MCF 10A (cell line): ENCODE measurements at regions of chr15 and their contacts with region 1.

Region 1: DNA sequence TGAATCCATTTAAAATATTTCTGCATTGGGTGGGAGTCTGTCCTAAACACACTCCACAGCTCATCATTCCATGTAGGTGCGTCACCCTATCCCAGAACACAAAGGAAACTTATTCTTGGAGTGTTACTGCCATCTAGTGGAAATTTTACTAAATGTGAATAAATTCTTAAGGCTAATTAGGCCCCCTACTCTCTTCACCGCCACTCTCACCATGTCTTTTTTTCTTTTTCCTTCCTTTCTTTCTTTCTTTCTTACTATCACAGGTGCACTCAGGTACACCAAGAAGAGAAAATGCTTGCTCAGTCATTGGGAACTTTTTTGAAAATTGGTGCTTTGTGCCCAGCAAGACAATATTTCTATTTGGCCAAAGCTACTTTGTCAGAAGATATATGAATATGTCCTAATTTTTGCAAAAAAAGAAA is 26.4 kb upstream of the ATP8B4 start:
- DNase-seq: peak; percentile 75
- H3K4me3 Mint-ChIP-seq: no peak overlapping the region
- H3K27ac Mint-ChIP-seq: no peak overlapping the region
- H3K4me1 Mint-ChIP-seq: peaks cover 12% of the 10 kb centered on the region
- H3K27me3 Mint-ChIP-seq: no peaks in the 10 kb centered on the region
- CTCF ChIP-seq: peak; percentile 49

Region 2: DNA sequence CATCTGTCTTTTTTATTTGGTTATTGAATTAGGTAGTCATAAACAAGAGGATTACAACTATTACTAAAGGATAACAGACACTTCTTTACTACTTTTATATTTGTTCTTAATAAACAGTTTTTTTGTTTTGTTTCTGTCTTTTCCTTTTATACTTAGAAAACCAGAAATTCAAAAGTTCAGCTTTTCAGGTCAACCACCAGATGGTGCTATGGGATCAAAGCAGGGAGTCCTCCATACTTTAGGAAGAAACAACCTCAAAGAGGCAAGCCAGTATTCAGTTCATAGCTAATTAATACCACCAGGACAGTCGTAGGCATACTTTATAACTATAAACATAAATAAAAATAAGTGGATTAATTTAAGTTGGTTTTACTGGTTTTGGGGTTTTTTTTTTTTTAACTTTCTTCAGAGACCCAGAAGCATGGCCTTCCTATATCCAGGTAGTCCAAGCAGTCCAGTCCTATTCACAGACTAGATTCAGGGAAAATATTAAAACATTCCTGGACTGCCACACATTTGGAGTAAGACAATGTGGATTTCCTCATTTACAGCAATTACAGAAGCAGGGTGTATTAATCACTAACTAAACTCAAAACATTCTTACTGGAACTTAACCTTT is 1283.5 kb before region 1 on chr15:
- CTCF ChIA-PET with region 1: interaction called, 5 read pairs
- POLR2A ChIA-PET with region 1: interaction called, 4 read pairs
- intact Hi-C with region 1: loop called (anchors 2 kb)
- DNase-seq: peak; percentile 72
- H3K4me3 Mint-ChIP-seq: no peak overlapping the region
- H3K27ac Mint-ChIP-seq: peak overlapping the region; percentile 61
- H3K4me1 Mint-ChIP-seq: peaks cover 29% of the 10 kb centered on the region
- H3K27me3 Mint-ChIP-seq: no peaks in the 10 kb centered on the region
- CTCF ChIP-seq: peak; percentile 73

Region 3: DNA sequence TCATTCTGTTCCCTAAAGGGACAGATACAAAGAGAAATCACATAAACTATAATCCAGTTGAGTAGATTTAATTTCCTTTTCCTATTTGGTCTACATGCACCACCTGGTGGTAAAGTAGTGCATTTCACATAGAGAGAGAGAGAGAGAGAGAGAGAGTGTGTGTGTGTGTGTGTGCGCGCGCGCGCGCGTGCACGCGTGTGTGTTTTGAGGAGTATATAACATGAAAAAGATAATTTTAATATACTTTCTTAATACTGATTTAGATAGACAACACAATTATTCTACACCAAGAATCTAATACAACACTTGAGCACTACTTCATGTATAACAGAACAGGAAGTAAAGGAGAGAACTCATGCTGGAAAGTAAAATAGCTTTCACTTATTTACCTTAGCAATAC is 723.5 kb before region 1 on chr15:
- CTCF ChIA-PET with region 1: no interaction called
- POLR2A ChIA-PET with region 1: no interaction called
- intact Hi-C with region 1: loop called (anchors 10 kb)
- DNase-seq: peak; percentile 70
- H3K4me3 Mint-ChIP-seq: peak overlapping the region; percentile 58
- H3K27ac Mint-ChIP-seq: no peak overlapping the region
- H3K4me1 Mint-ChIP-seq: peaks cover 7% of the 10 kb centered on the region
- H3K27me3 Mint-ChIP-seq: no peaks in the 10 kb centered on the region
- CTCF ChIP-seq: peak; percentile 72

Region 4: GRCh38 chr15:49953421-49953820 is 192.0 kb before region 1 on chr15:
- CTCF ChIA-PET with region 1: no interaction called
- POLR2A ChIA-PET with region 1: no interaction called
- intact Hi-C with region 1: no loop called
- DNase-seq: no peak
- H3K4me3 Mint-ChIP-seq: no peak overlapping the region
- H3K27ac Mint-ChIP-seq: no peak overlapping the region
- H3K4me1 Mint-ChIP-seq: no peaks in the 10 kb centered on the region
- H3K27me3 Mint-ChIP-seq: no peaks in the 10 kb centered on the region
- CTCF ChIP-seq: no peak

Region 5: DNA sequence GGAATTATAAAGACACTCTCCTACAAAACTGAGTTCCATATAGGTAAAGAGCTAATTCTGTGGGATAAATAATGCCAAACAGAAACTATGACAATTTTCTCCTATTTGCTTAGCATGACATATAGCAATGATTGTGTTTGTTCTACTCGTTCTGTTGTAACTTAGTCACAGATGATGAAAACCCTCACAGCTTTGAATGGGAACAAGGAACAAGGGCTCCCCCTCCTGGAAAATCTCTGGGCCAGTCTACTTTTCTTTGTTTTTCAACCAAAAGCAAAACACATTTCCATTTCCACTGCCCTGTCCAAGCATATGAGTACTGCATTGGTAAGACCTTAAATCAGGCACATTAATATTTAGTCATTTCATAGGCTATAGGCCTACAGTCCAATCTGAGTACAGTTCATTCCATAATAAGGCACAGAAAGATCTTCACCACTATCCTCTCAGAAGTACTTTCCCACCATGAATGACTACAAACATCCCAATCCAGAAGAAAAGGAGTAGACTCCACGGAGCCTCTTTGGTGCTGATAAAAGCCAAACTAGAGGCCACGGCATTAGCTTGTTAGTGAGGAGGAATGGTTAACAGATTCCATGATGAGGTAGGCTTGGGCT is 93.6 kb before region 1 on chr15:
- CTCF ChIA-PET with region 1: interaction called, 3 read pairs
- POLR2A ChIA-PET with region 1: no interaction called
- intact Hi-C with region 1: loop called (anchors 2 kb)
- DNase-seq: peak; percentile 79
- H3K4me3 Mint-ChIP-seq: no peak overlapping the region
- H3K27ac Mint-ChIP-seq: peak overlapping the region; percentile 51
- H3K4me1 Mint-ChIP-seq: peaks cover 11% of the 10 kb centered on the region
- H3K27me3 Mint-ChIP-seq: no peaks in the 10 kb centered on the region
- CTCF ChIP-seq: peak; percentile 79

Region 6: DNA sequence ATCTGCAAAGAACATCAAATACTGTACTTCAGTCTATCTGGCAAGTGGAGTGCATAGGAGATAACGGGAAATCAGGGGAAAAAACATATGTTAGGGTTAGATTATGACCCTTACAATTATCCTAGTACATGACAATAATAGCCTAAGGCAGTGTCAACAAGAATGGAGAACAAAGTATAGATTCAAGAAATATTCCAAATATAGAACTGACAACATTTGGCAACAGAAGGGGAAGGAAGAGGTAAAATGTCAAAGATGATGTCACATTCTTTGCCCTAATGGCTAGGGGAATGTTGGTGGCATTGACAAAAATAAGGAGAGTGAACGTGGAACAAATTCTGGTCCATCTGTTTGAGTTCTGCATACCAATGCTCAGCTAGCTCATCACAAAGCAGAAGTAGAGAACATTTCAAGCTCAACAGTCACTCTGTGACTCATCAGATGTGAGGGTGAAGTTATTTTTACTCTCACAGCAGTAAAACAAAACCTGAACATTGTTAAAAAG is 10.9 kb before region 1 on chr15:
- CTCF ChIA-PET with region 1: interaction called, 11 read pairs
- POLR2A ChIA-PET with region 1: interaction called, 3 read pairs
- intact Hi-C with region 1: no loop called
- DNase-seq: peak; percentile 62
- H3K4me3 Mint-ChIP-seq: peak overlapping the region; percentile 1
- H3K27ac Mint-ChIP-seq: peak overlapping the region; percentile 59
- H3K4me1 Mint-ChIP-seq: peaks cover 41% of the 10 kb centered on the region
- H3K27me3 Mint-ChIP-seq: no peaks in the 10 kb centered on the region
- CTCF ChIP-seq: no peak

Region 7: DNA sequence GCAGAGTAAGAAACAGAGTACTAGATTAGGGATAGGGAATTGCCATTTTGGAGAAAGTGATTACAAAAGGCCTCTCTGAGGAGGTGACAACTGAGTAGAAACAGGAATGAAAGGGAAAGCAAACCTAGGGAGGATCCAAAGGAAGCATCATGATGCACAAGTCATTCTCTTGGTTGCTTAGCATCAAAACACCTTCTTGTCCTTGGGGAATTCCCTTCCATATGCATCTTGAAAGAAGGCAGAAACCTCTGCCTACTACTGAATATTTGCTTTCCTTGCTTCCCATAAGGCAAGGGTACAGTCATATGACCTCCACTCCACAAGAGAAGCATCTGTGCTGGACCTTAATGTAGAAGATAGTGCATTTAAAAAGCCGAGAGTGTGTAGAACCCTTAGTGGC is 185.5 kb after region 1 on chr15:
- CTCF ChIA-PET with region 1: interaction called, 11 read pairs
- POLR2A ChIA-PET with region 1: interaction called, 3 read pairs
- intact Hi-C with region 1: no loop called
- DNase-seq: no peak
- H3K4me3 Mint-ChIP-seq: no peak overlapping the region
- H3K27ac Mint-ChIP-seq: no peak overlapping the region
- H3K4me1 Mint-ChIP-seq: peaks cover 14% of the 10 kb centered on the region
- H3K27me3 Mint-ChIP-seq: no peaks in the 10 kb centered on the region
- CTCF ChIP-seq: no peak